CD4-positive, alpha-beta memory T cell (primary cell): ENCODE measurements at regions of chr3 and their contacts with region 1.

Region 1: GRCh38 chr3:155701882-155702465 is 42.9 kb downstream of the PLCH1 start:
- DNase-seq: peak in 4 of 5 donors; percentile 30 to 43 (median 34)
- H3K4me3 ChIP-seq: no peak overlapping the region
- H3K4me3 Mint-ChIP-seq: no peak overlapping the region
- H3K27ac ChIP-seq: no peak overlapping the region
- H3K27ac Mint-ChIP-seq: no peak overlapping the region
- H3K4me1 ChIP-seq: no peaks in the 10 kb centered on the region
- H3K4me1 Mint-ChIP-seq: no peaks in the 10 kb centered on the region
- H3K27me3 ChIP-seq: no peaks in the 10 kb centered on the region
- H3K27me3 Mint-ChIP-seq: peaks cover 1 to 5% of the 10 kb centered on the region in 2 donors

Region 2: DNA sequence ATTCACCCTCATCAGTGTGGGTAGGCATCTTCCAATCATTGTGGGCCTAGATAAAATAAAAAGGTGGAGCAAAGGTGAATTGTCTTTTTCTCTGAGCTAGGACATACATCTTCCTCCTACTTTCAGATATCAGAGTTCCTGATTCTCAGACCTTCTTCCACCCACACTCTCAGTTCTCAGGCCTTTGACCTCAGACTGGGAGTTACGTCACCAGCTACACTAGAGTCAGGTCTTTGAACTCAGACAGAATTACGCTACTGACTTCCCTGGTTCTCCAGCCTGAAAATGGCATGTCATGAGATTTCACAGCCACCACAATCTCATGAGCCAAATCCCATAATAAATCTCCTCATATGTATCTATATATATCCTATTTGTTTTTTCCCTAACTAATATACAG is 447.5 kb before region 1 on chr3:
- CTCF ChIA-PET with region 1: no interaction called
- POLR2A ChIA-PET with region 1: no interaction called
- intact Hi-C with region 1: no loop called
- DNase-seq: no peak
- H3K4me3 ChIP-seq: no peak overlapping the region
- H3K4me3 Mint-ChIP-seq: no peak overlapping the region
- H3K27ac ChIP-seq: no peak overlapping the region
- H3K27ac Mint-ChIP-seq: no peak overlapping the region
- H3K4me1 ChIP-seq: no peaks in the 10 kb centered on the region
- H3K4me1 Mint-ChIP-seq: no peaks in the 10 kb centered on the region
- H3K27me3 ChIP-seq: no peaks in the 10 kb centered on the region
- H3K27me3 Mint-ChIP-seq: peaks cover 0 to 2% of the 10 kb centered on the region in 2 donors

Region 3: DNA sequence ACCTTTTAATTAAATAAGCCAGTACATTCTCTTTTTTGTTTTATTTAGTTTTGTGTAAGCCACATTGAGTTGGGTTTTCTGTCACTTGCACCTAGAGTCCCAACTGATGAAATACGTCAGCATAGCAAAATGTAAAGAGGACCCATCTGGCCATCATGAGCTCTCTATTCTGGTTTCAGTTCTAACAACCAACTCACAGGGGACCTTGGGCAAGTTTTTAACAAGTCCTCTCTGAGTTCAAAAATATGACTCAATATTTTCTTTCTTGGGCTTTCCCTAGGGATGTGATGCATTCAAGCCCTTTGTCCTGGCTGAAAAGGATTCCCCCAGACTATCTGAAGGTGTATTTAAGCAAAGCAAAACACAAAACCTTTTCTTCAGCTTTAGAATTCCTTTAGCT is 10.0 kb after region 1 on chr3:
- CTCF ChIA-PET with region 1: interaction called, 30 read pairs
- POLR2A ChIA-PET with region 1: no interaction called
- intact Hi-C with region 1: no loop called
- DNase-seq: no peak
- H3K4me3 ChIP-seq: no peak overlapping the region
- H3K4me3 Mint-ChIP-seq: no peak overlapping the region
- H3K27ac ChIP-seq: no peak overlapping the region
- H3K27ac Mint-ChIP-seq: no peak overlapping the region
- H3K4me1 ChIP-seq: no peaks in the 10 kb centered on the region
- H3K4me1 Mint-ChIP-seq: no peaks in the 10 kb centered on the region
- H3K27me3 ChIP-seq: no peaks in the 10 kb centered on the region
- H3K27me3 Mint-ChIP-seq: no peaks in the 10 kb centered on the region